HEK293 (cell line): ENCODE measurements at regions of chr15 and their contacts with region 1.

Region 1: DNA sequence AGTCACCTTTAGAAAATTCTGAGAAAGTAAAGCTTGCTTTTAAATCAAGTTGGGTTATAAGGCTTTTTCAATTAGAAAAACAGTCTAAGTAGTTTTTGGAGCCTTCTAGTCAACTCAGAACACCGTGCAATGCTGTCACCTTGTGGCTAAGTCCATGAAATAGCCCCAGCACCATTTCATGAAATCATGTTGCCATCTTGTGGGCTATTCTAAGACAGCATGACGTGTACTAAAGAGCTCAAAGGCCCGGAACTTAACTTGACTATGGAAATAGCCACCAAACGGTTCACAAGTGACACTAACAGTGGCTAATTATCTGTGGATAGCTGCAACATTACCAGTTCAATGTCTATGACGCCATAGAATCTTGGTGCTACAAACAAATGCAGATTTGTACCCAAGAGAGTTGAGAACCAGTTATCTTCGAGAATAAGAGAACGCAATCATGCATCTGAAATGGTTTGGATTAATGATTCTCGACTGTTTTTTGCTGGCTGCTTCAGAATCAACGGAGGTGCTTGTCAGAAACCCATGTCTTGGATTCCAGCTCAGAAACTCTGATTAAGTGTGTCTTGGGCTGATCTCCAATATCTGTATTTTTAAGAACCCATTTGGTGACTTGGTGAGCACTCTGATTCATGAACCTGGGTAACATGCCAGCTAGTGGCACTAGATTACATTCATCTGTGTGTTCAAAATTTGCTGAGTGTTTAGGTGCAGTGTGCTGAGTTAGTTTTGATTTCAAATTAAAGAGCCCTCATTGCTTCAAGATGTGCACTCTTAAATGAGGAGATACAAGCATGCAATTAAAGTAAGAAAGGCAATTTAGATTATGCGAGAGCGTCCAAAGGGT is 111.2 kb upstream of the MCTP2 start:
- H3K4me3 ChIP-seq: no peak overlapping the region
- H3K27ac ChIP-seq: no peak overlapping the region
- H3K4me1 ChIP-seq: peaks cover 9% of the 10 kb centered on the region
- CTCF ChIP-seq: peak; percentile 91

Region 2: DNA sequence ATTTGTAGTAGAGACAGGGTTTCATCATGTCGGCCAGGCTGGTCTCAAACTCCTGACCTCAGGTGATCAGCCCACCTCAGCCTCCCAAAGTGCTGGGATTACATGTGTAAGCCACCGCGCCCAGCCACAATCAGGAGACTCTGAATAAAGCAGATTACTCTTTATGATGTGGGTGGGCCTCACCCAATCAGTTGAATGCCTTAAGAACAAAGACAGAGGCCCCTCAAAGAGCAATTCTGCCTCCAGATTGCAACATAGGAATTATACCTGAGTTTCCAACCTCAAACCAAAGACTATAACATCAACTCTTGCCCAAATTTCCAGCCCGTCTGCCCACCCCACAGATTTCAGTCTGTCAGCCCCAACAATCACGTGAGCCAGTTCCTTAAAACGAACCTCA is 1445.8 kb before region 1 on chr15:
- CTCF ChIA-PET with region 1: no interaction called
- POLR2A ChIA-PET with region 1: no interaction called
- H3K4me3 ChIP-seq: no peak overlapping the region
- H3K27ac ChIP-seq: no peak overlapping the region
- H3K4me1 ChIP-seq: no peaks in the 10 kb centered on the region
- CTCF ChIP-seq: no peak

Region 3: DNA sequence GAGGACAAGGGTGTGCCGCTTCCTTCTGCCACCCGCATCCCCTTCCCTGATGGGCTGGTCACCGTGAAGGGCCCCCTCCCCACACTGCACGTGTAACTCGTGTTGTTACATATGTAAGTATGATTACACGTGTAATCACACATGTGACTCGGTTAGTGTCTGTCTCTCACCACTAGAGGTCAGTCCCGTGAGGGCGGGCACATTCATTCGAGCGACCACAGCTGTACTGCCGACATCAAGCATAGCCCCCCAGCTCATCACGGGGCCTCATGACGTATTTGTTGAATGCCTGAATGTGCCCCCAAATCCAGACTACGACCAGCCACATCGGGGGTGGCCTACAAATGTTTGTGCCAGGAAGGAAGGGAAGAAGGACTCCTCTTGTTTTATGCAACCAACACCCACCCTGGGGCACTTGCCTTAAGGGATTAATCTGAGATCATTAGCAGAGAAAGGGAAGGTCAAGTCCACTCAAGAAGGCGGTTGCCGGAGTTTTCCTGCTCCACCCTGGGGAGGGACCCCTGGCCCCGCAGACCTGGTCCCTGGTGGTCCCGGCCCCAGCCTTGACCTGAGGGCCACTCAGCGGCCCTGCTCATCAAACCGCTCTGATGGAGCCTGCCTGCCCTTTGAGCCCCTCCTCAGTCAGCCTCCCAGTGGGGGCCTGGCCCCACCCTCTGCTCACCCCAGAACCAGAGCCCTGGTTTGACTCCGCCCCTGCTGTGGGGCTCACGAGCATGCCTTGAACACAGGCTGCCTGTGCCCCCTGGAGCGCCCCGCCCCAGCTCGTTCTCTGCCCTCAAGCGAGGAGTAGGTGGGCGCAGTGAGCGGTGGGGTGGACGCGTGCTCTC is 1084.0 kb before region 1 on chr15:
- CTCF ChIA-PET with region 1: interaction called, 147 read pairs
- POLR2A ChIA-PET with region 1: no interaction called
- H3K4me3 ChIP-seq: no peak overlapping the region
- H3K27ac ChIP-seq: no peak overlapping the region
- H3K4me1 ChIP-seq: no peaks in the 10 kb centered on the region
- CTCF ChIP-seq: peak; percentile 87

Region 4: DNA sequence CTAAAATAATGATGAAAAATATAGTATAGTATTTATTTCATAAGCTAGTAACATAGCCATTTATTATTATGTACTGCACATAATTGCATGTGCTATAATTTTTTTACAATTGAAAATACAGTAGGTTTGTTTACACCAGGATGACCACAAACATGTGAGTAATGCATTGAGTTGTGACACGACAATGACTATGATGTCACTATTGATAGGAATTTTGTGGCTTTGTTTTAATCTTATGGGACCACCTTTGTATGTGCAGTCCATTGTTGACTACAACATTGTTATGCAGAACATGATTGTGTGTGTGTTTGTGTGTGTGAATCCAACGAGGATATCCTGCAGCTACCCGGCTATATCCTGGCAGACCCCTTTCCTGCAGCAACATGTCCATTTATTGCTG is 261.0 kb before region 1 on chr15:
- CTCF ChIA-PET with region 1: interaction called, 10 read pairs
- POLR2A ChIA-PET with region 1: no interaction called
- H3K4me3 ChIP-seq: no peak overlapping the region
- H3K27ac ChIP-seq: no peak overlapping the region
- H3K4me1 ChIP-seq: no peaks in the 10 kb centered on the region
- CTCF ChIP-seq: no peak

Region 5: GRCh38 chr15:93989440-93989998 is 130.6 kb before region 1 on chr15:
- CTCF ChIA-PET with region 1: interaction called, 10 read pairs
- POLR2A ChIA-PET with region 1: no interaction called
- H3K4me3 ChIP-seq: no peak overlapping the region
- H3K27ac ChIP-seq: no peak overlapping the region
- H3K4me1 ChIP-seq: no peaks in the 10 kb centered on the region
- CTCF ChIP-seq: no peak

Region 6: DNA sequence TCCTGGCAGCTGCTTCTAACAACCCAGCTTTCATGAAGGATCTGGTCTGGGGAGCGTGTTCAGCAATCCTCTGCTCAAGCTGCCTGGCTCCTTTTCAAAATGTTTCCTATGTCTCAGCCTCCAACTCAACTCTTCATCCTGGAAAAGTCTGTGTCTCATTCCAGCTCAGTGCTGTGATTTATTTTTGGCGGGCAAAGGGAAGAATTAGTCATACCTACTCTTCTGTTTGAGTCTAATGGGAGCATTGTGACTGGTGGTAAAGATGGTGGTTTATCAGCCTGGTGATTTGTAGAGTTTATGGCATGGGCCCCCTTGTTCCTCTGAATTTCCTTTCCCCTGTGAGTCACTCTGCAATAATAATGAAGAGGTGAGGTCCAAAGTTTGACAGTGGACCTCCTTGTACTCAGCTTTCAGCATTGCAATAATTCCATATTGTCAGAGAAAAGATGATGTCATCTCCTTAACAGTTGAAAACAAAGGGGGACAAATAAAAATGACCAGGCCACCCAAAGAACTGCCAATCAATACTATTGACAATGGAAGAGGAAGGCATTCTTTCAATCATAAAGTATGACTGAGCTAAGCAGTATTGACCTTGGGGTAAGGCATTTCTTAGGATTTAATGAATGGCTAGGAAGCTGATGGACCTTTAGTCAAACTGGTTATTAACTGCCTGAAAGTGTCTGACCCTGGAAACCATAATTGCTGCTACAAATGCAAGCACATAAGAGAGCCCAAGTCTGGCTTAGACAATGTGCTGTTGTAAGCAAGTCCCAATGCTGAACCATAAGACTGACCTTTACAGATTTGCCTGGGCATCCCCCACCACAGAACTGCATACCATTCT is 93.5 kb before region 1 on chr15:
- CTCF ChIA-PET with region 1: interaction called, 11 read pairs
- POLR2A ChIA-PET with region 1: no interaction called
- H3K4me3 ChIP-seq: no peak overlapping the region
- H3K27ac ChIP-seq: no peak overlapping the region
- H3K4me1 ChIP-seq: peaks cover 3% of the 10 kb centered on the region; the same call in 1 of the 2 replicates
- CTCF ChIP-seq: no peak

Region 7: DNA sequence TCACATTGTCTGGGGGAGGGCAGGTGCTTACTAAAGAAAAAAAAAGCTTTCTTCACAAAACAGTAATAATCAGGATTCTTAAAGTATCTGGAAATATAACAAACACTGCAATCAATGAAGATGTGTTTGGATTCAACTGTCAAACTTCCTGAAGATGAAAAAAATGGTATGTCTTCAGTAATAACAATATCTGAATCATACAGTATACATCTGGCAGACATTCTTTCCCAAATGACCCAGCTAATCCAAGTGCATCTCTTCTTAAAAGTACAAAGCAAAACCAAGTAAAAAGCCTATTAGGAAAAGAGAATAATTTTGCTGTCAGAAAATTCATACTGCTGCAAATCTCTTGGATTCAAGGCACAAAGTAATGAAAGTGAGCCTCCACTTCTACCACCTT is 33.8 kb before region 1 on chr15:
- CTCF ChIA-PET with region 1: interaction called, 12 read pairs
- POLR2A ChIA-PET with region 1: no interaction called
- H3K4me3 ChIP-seq: no peak overlapping the region
- H3K27ac ChIP-seq: no peak overlapping the region
- H3K4me1 ChIP-seq: peaks cover 8% of the 10 kb centered on the region
- CTCF ChIP-seq: no peak